HEK293 (cell line): ENCODE measurements at regions of chr13 and their contacts with region 1.

Region 1: DNA sequence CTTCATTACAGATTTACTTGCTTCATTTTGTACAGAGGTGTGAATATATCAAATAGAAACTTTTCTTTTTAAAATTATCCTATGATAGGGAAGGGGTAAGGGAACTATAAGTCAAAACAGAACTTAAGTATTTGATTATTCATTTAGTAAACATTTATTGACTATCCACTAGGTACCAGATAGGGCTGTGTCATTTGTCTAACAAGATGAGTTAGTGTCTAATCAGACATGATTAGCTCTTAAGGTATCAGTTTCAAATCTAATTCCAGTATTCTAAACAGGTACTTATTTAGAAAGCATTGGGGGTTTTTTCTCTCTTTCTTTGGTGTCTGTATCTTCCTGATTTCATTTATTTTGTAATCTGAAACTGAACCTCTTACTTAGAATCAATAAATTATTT is 32.2 kb downstream of the CDADC1 start:
- H3K4me3 ChIP-seq: no peak overlapping the region
- H3K27ac ChIP-seq: no peak overlapping the region
- H3K4me1 ChIP-seq: no peaks in the 10 kb centered on the region
- CTCF ChIP-seq: no peak

Region 2: GRCh38 chr13:49098771-49099512 is 180.9 kb before region 1 on chr13:
- CTCF ChIA-PET with region 1: interaction called, 10 read pairs
- POLR2A ChIA-PET with region 1: no interaction called
- H3K4me3 ChIP-seq: no peak overlapping the region
- H3K27ac ChIP-seq: no peak overlapping the region
- H3K4me1 ChIP-seq: peaks cover 7% of the 10 kb centered on the region; the same call in 1 of the 2 replicates
- CTCF ChIP-seq: no peak

Region 3: DNA sequence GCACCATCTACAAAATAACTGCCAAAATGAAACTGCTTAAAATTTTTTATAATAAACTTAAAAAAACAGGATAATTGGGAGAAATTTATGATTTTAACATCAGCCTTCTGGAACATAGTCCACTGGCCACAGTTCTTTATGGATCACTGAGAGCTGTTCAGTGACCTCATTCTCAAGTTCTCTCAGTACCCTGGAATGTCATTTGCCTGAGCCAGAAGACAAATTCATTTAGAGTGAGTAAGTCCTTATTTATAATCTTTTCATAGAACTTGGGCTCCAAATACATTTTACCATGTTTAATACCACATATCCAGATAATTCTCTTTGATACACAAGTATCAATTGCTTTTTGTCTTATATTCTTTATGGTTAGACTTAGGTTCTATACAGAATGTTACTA is 76.3 kb after region 1 on chr13:
- CTCF ChIA-PET with region 1: no interaction called
- POLR2A ChIA-PET with region 1: no interaction called
- H3K4me3 ChIP-seq: no peak overlapping the region
- H3K27ac ChIP-seq: no peak overlapping the region
- H3K4me1 ChIP-seq: no peaks in the 10 kb centered on the region
- CTCF ChIP-seq: no peak